Activated CD8-positive, alpha-beta T cell treated with anti-CD3 and anti-CD28 coated beads for 36 hours (primary cell): ENCODE measurements at regions of chr7 and their contacts with region 1.

Region 1: DNA sequence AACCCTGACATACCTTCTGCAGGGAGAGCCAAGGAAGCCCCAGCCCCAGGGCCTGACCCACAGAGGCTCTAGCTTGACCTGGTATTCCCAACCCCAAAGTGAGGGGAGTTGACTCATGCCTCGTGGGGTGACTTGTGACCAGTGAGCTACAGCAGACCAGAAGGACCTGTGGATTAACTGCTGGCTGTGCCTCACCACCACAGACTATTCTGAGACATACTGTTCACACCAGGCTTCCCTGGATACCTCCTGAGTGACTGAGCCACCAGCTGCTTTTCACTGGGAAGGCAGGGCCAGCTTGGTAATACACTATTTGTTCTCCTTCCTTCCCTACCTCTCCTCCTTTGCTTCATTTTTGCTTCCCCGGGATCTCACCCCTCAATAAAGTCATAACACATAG is 7.3 kb downstream of the PLXNA4 start:
- DNase-seq: no peak
- ATAC-seq: no peak
- H3K4me3 Mint-ChIP-seq: no peak overlapping the region
- H3K27ac Mint-ChIP-seq: no peak overlapping the region
- H3K4me1 Mint-ChIP-seq: peaks cover 7% of the 10 kb centered on the region
- H3K27me3 Mint-ChIP-seq: peaks cover 55% of the 10 kb centered on the region
- CTCF ChIP-seq: no peak

Region 2: GRCh38 chr7:132394283-132395198 is 174.4 kb before region 1 on chr7:
- CTCF ChIA-PET with region 1: interaction called, 10 read pairs
- POLR2A ChIA-PET with region 1: no interaction called
- intact Hi-C with region 1: no loop called
- DNase-seq: peak; percentile 51
- ATAC-seq: peak; percentile 74
- H3K4me3 Mint-ChIP-seq: no peak overlapping the region
- H3K27ac Mint-ChIP-seq: no peak overlapping the region
- H3K4me1 Mint-ChIP-seq: no peaks in the 10 kb centered on the region
- H3K27me3 Mint-ChIP-seq: no peaks in the 10 kb centered on the region
- CTCF ChIP-seq: peak; percentile 67

Region 3: GRCh38 chr7:132548489-132549078 is 20.4 kb before region 1 on chr7:
- CTCF ChIA-PET with region 1: no interaction called
- POLR2A ChIA-PET with region 1: no interaction called
- intact Hi-C with region 1: no loop called
- DNase-seq: peak; percentile 72
- ATAC-seq: peak; percentile 74
- H3K4me3 Mint-ChIP-seq: no peak overlapping the region
- H3K27ac Mint-ChIP-seq: no peak overlapping the region
- H3K4me1 Mint-ChIP-seq: peaks cover 6% of the 10 kb centered on the region
- H3K27me3 Mint-ChIP-seq: no peaks in the 10 kb centered on the region
- CTCF ChIP-seq: no peak